ENCODE measurements at regions of chr2 and their contacts with region 1.

Region 1: GRCh38 chr2:54755641-54756326 is 32.3 kb downstream of the EML6 start:
- DNase-seq: no peak
- ATAC-seq: peak; percentile 61; the same call in 1 of the 2 replicates
- H3K4me3 ChIP-seq: no peak overlapping the region
- H3K27ac ChIP-seq: no peak overlapping the region
- H3K4me1 ChIP-seq: no peaks in the 10 kb centered on the region; the same call in 1 of the 2 replicates
- H3K27me3 ChIP-seq: no peaks in the 10 kb centered on the region
- CTCF ChIP-seq: peak; percentile 38

Region 2: DNA sequence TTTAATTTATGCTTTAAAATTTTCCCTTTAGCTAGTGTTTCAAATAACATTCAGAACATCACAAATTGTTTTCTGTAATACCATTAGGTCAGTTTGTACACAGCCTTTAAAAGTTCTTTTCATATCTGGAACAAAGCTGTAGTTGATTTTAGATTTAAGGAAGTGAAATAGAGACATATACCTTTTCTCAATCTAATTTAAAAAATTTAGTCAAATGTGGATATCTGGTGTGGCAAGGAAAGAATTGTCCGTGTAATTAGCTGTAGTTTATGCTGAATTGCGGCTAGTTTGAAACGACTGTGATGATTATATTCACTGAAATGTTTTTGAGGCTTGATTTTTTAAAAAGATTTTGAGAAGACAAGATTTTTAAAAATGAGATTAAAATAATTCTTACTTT is 27.6 kb after region 1 on chr2:
- CTCF ChIA-PET with region 1: no interaction called
- POLR2A ChIA-PET with region 1: interaction called, 12 read pairs
- in situ Hi-C with region 1: no loop called
- intact Hi-C with region 1: no loop called
- DNase-seq: no peak
- ATAC-seq: no peak
- H3K4me3 ChIP-seq: no peak overlapping the region
- H3K27ac ChIP-seq: no peak overlapping the region
- H3K4me1 ChIP-seq: no peaks in the 10 kb centered on the region
- H3K27me3 ChIP-seq: no peaks in the 10 kb centered on the region
- CTCF ChIP-seq: no peak

Region 3: GRCh38 chr2:54956111-54956627 is 200.4 kb after region 1 on chr2:
- CTCF ChIA-PET with region 1: no interaction called
- POLR2A ChIA-PET with region 1: no interaction called
- in situ Hi-C with region 1: no loop called
- intact Hi-C with region 1: no loop called
- DNase-seq: peak; percentile 81
- ATAC-seq: peak; percentile 79
- H3K4me3 ChIP-seq: no peak overlapping the region; a peak in 1 of 4 replicates
- H3K27ac ChIP-seq: peak overlapping the region; percentile 96
- H3K4me1 ChIP-seq: peaks cover 65% of the 10 kb centered on the region
- H3K27me3 ChIP-seq: no peaks in the 10 kb centered on the region
- CTCF ChIP-seq: no peak